BJ (cell line): ENCODE measurements at regions of chr2 and their contacts with region 1.

Region 1: DNA sequence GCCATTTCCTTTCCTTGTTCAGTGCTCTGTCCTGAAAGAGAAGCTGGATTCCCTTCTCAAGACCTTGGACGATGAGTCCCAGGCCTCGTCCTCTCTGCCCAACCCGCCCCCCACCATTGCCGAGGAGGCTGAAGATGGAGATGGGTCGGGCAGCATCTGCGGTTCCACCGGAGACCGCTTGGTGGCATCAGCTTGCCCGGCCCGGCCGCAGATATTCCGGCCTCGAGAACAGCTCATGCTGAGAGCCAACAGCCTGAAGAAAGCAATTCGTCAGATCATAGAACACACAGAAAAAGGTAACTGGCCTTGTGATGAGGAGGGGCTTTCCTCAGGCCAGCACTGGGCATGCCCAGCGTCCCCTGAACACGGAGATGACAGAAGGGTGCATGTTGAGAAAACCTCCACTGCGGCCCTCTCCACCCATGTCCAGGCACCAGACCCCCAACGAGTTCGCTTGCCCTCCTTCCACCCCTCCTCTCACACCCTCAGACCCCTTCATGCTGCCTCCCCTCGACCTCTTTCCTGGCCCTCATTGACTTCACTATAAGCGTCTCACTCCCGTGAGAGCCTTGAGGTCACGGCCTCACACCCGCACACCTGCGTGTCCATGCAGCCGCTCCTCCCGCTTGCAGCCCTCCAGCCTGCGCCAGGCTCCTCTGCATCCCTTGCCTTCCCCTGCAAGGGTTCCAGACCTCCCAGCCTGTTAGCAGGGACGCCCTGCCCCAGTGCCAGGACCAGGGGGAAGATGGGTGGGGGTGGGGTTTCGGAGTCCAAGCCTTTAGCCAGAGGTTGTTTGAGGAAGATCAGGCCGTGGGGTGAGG is 95.0 kb downstream of the DGKD start:
- DNase-seq: no peak
- H3K4me3 ChIP-seq: no peak overlapping the region
- H3K27me3 ChIP-seq: no peaks in the 10 kb centered on the region
- CTCF ChIP-seq: peak; percentile 92

Region 2: GRCh38 chr2:233489666-233490065 is 40.4 kb after region 1 on chr2:
- CTCF ChIA-PET with region 1: no interaction called
- POLR2A ChIA-PET with region 1: no interaction called
- DNase-seq: no peak
- H3K4me3 ChIP-seq: no peak overlapping the region
- H3K27me3 ChIP-seq: no peaks in the 10 kb centered on the region
- CTCF ChIP-seq: no peak

Region 3: DNA sequence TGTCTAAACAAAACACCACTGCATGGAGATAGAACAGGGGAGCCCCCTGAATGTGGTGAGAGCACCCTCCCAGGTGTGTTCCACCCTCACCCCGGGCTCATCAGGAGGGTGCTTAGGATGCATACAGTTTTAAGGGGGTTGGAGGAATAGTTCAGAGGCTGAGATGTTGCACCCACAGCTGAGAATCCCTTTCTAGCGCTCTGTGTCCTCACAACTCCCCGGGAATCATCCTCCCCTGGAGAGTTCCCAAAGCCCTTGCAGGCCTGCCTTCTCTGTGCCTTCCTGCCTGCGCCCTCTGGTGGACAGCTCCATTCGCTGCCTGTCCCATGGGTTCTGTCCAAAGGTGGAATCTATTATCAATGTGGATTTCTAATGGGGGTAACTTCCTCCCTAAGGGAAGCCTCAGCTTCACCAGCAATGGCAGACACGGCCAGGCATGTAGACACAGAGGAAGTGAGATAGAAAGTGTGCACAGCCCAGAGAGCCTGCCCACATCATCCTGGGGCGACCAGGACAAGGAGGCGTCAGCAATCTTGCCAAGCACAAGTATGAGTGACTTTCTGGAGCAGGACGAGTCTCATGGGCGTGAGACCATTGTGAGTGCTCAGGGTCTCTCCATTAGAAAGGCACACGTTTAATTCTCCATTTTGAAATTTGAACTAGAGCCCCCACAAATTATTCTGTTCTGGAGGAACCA is 262.2 kb after region 1 on chr2:
- CTCF ChIA-PET with region 1: interaction called, 56 read pairs
- POLR2A ChIA-PET with region 1: no interaction called
- DNase-seq: no peak
- H3K4me3 ChIP-seq: no peak overlapping the region
- H3K27me3 ChIP-seq: no peaks in the 10 kb centered on the region
- CTCF ChIP-seq: peak; percentile 96

Region 4: GRCh38 chr2:233832869-233833311 is 383.6 kb after region 1 on chr2:
- CTCF ChIA-PET with region 1: interaction called, 11 read pairs
- POLR2A ChIA-PET with region 1: no interaction called
- DNase-seq: no peak
- H3K4me3 ChIP-seq: no peak overlapping the region
- H3K27me3 ChIP-seq: no peaks in the 10 kb centered on the region
- CTCF ChIP-seq: peak; percentile 38